Esophagus muscularis mucosa (tissue), 4 donors: ENCODE measurements at regions of chr7 and their contacts with region 1.

Region 1: GRCh38 chr7:38107486-38107893 is 70.6 kb upstream of the STARD3NL start:
- DNase-seq: no peak
- H3K4me3 ChIP-seq: no peak overlapping the region
- H3K27ac ChIP-seq: no peak overlapping the region
- H3K4me1 ChIP-seq: peaks cover 0 to 8% (median 0%) of the 10 kb centered on the region in 4 donors
- H3K27me3 ChIP-seq: no peaks in the 10 kb centered on the region
- CTCF ChIP-seq: peak; percentile 68 to 80 (median 75)
- EP300 ChIP-seq: no peak
- POLR2A ChIP-seq: no peak

Region 2: DNA sequence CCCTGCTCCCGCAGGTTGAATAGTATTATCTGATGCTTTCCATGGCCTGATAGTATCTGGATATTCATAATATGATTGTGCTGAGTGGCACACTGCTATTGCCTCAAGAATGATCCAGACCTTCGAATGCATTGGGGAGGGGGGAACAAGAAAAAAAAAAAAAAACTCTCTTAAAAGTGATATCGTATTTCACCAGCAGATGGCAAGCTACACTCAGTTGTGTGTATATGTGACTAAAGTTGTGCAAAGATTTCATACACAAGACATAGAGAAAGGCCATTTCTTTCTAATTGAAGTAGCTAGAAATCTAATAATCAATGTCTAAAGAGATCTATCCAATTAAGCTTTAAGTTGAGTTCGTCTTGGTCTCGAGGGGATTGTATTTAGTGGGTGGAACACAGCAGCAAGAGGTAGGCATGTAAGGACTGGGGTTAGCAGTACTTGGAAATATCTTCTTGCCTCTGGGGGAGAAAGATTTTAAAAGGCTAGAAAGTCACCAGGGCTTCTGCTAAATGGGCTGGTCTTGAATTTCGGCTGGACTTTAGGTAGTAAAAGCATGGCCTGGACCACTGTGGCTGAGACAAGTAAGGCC is 206.2 kb before region 1 on chr7:
- intact Hi-C with region 1: loop called (anchors 5 kb)
- DNase-seq: no peak
- H3K4me3 ChIP-seq: no peak overlapping the region
- H3K27ac ChIP-seq: peak overlapping the region in 1 of 4 donors; percentile 30
- H3K4me1 ChIP-seq: peaks cover 11 to 21% (median 16%) of the 10 kb centered on the region in 4 donors
- H3K27me3 ChIP-seq: no peaks in the 10 kb centered on the region
- CTCF ChIP-seq: peak; percentile 43 to 65 (median 57)
- EP300 ChIP-seq: no peak
- POLR2A ChIP-seq: no peak

Region 3: GRCh38 chr7:38369816-38370493 is 262.5 kb after region 1 on chr7:
- intact Hi-C with region 1: loop called (anchors 10 kb)
- DNase-seq: peak; percentile 96
- H3K4me3 ChIP-seq: peak overlapping the region in 2 of 4 donors; percentile 24 to 28
- H3K27ac ChIP-seq: no peak overlapping the region
- H3K4me1 ChIP-seq: peaks cover 0 to 15% (median 5%) of the 10 kb centered on the region in 4 donors
- H3K27me3 ChIP-seq: no peaks in the 10 kb centered on the region
- CTCF ChIP-seq: peak; percentile 58 to 89 (median 69)
- EP300 ChIP-seq: no peak
- POLR2A ChIP-seq: no peak